WTC11 (cell line): ENCODE measurements at regions of chr20 and their contacts with region 1.

Region 1: GRCh38 chr20:1503564-1504227 is 12.5 kb upstream of the SIRPB2 start:
- DNase-seq: peak; percentile 81
- ATAC-seq: peak; percentile 92
- H3K4me3 Mint-ChIP-seq: no peak overlapping the region
- H3K27ac Mint-ChIP-seq: no peak overlapping the region
- H3K4me1 Mint-ChIP-seq: peaks cover 18% of the 10 kb centered on the region
- H3K27me3 Mint-ChIP-seq: peaks cover 33% of the 10 kb centered on the region
- CTCF ChIP-seq: peak; percentile 53

Region 2: DNA sequence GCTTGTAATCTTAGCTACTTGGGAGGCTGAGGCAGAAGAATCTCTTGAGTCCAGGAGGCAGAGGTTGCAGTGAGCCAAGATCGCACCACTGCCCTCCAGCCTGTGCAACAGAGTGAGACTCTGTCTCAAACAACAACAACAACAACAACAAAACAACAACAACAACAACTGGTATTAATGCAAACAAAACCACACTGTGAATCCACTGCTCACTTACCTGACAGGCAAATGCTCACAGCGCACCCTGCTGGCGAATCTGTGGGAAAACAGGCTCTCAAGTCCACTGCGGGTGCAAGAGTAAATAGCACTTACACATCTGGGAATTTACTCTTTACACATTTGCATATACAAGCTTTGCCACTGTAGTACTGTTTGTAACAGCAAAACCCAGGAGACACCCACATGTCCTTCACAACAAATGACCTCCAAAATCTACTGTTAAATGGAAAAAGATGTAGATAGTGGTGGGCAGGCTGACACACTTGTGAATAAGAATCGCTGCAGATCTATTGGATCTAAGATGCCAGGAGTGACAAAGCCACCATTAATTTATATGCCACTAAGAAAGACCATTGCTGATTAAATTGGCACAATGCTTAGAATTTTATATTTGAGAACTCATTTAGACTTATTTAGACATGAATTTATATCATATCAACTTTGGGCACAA is 66.3 kb before region 1 on chr20:
- CTCF ChIA-PET with region 1: interaction called, 16 read pairs
- POLR2A ChIA-PET with region 1: no interaction called
- DNase-seq: peak; percentile 82
- ATAC-seq: peak; percentile 56; the same call in 1 of the 2 replicates
- H3K4me3 Mint-ChIP-seq: no peak overlapping the region
- H3K27ac Mint-ChIP-seq: peak overlapping the region; percentile 29; the same call in 1 of the 2 replicates
- H3K4me1 Mint-ChIP-seq: peaks cover 13% of the 10 kb centered on the region
- H3K27me3 Mint-ChIP-seq: no peaks in the 10 kb centered on the region
- CTCF ChIP-seq: peak; percentile 76

Region 3: GRCh38 chr20:1466211-1467081 is 37.2 kb before region 1 on chr20 and contains the start of gene NSFL1C:
- CTCF ChIA-PET with region 1: interaction called, 38 read pairs
- POLR2A ChIA-PET with region 1: interaction called, 3 read pairs
- DNase-seq: peak; percentile 98
- ATAC-seq: peak; percentile 91
- H3K4me3 Mint-ChIP-seq: peak within 1 kb of the TSS; percentile 85
- H3K27ac Mint-ChIP-seq: peak within 1 kb of the TSS; percentile 53; the same call in 1 of the 2 replicates
- H3K4me1 Mint-ChIP-seq: peaks cover 27% of the 10 kb centered on the region
- H3K27me3 Mint-ChIP-seq: peaks cover 4% of the 10 kb centered on the region
- CTCF ChIP-seq: peak; percentile 91
- total RNA-seq, gene NSFL1C: 76.7 to 85.5 TPM (median 83.2 TPM) in 3 replicates

Region 4: DNA sequence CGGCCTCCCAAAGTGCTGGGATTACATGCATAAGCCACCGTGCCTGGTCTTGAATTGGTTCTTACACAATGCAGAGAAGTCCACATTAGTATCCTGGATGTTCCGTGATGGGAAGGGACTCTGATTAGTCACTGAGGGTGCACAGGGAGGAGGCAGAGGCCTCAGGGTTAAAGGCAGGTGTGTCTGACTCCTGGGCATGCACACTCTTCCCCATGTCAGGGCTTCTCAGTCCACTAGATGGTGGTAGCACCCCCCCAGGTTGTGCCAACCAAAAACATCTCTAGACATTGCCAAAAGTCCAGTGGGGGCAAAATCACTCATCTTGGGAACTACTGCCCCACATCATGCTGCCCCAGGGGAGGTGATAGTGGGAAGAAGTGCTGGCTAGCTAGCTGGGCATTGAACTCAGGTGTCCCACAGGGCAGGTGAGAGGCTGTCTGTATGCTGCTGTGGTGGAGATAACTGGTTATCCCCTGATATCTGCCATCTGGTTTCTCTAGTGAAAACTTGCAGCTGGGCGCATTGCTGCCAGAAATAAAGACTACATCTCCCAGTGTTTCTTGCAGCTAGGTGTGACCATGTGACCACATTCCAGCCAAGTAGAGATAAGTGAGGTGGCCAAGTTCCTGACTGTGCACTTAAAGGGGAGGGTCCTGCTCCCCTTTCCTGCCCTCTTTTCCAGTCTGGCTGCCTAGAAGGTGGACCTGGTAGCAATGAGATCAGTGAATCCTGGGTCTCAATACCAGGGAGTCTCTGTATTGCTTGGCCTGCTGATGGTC is 28.7 kb before region 1 on chr20:
- CTCF ChIA-PET with region 1: interaction called, 31 read pairs
- POLR2A ChIA-PET with region 1: no interaction called
- DNase-seq: no peak
- ATAC-seq: peak; percentile 86
- H3K4me3 Mint-ChIP-seq: no peak overlapping the region
- H3K27ac Mint-ChIP-seq: no peak overlapping the region
- H3K4me1 Mint-ChIP-seq: peaks cover 5% of the 10 kb centered on the region; the same call in 1 of the 2 replicates
- H3K27me3 Mint-ChIP-seq: peaks cover 27% of the 10 kb centered on the region
- CTCF ChIP-seq: no peak

Region 5: GRCh38 chr20:1491281-1491840 is 12.3 kb before region 1 on chr20 and contains the start of gene SIRPB2:
- CTCF ChIA-PET with region 1: interaction called, 23 read pairs
- POLR2A ChIA-PET with region 1: no interaction called
- DNase-seq: no peak
- ATAC-seq: no peak
- H3K4me3 Mint-ChIP-seq: no peak within 1 kb of the TSS
- H3K27ac Mint-ChIP-seq: no peak within 1 kb of the TSS
- H3K4me1 Mint-ChIP-seq: no peaks in the 10 kb centered on the region
- H3K27me3 Mint-ChIP-seq: peaks cover 44% of the 10 kb centered on the region
- CTCF ChIP-seq: no peak
- total RNA-seq, gene SIRPB2: not detected in 3 replicates

Region 6: GRCh38 chr20:1636621-1637020 is 132.9 kb after region 1 on chr20:
- CTCF ChIA-PET with region 1: interaction called, 17 read pairs
- POLR2A ChIA-PET with region 1: no interaction called
- DNase-seq: no peak
- ATAC-seq: peak; percentile 66
- H3K4me3 Mint-ChIP-seq: no peak overlapping the region
- H3K27ac Mint-ChIP-seq: no peak overlapping the region
- H3K4me1 Mint-ChIP-seq: peaks cover 31% of the 10 kb centered on the region
- H3K27me3 Mint-ChIP-seq: peaks cover 5% of the 10 kb centered on the region; the same call in 1 of the 2 replicates
- CTCF ChIP-seq: no peak